ENCODE measurements at regions of chr18 and their contacts with region 1.

Region 1: GRCh38 chr18:23578891-23579653 is 7.2 kb downstream of the NPC1 start:
- DNase-seq: no peak
- H3K4me3 ChIP-seq: no peak overlapping the region
- H3K27ac ChIP-seq: no peak overlapping the region
- H3K4me1 ChIP-seq: peaks cover 5 to 53% (median 11%) of the 10 kb centered on the region in 4 donors
- H3K27me3 ChIP-seq: no peaks in the 10 kb centered on the region
- CTCF ChIP-seq: no peak
- EP300 ChIP-seq: no peak
- POLR2A ChIP-seq: no peak

Region 2: DNA sequence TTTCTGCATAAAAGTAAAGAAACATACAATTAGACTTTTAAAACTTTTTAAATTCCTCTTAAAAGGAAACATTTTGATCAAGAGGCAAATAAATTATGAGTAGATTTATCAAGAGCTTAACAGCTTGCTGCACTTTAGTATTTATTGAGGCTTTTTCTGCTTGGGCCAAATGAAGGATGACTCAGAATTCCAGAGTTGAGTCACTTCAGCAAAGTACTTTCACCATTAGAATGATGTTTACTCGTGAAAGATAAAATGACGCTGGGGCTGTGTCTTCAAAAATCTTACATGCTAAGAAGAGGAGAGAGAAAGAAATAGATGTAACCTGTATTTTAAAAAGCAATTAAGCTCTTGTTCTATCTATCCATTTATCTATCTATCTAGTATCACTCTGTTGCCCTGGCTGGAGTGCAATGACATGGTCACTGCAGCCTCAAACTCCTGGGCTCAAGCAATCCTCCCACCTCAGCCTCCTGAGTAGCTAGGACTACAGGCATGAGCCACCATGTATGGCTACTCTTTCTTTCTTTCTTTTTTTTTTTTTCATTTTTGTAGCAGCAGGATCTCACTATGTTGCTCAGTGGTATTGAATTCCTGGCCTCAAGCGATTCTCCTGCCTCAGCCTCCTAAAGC is 201.3 kb before region 1 on chr18:
- in situ Hi-C with region 1: no loop called
- intact Hi-C with region 1: no loop called
- DNase-seq: no peak
- H3K4me3 ChIP-seq: no peak overlapping the region
- H3K27ac ChIP-seq: peak overlapping the region; percentile 44 to 76 (median 64)
- H3K4me1 ChIP-seq: peaks cover 3 to 20% (median 13%) of the 10 kb centered on the region in 4 donors
- H3K27me3 ChIP-seq: no peaks in the 10 kb centered on the region
- CTCF ChIP-seq: no peak
- EP300 ChIP-seq: no peak
- POLR2A ChIP-seq: no peak

Region 3: GRCh38 chr18:23503038-23503962 is 75.8 kb before region 1 on chr18 and contains the start of gene RMC1:
- in situ Hi-C with region 1: loop called in 1 of 4 experiments (anchors 5 kb)
- intact Hi-C with region 1: no loop called
- DNase-seq: peak; percentile 98
- H3K4me3 ChIP-seq: peak within 1 kb of the TSS; percentile 85 to 99 (median 93)
- H3K27ac ChIP-seq: peak within 1 kb of the TSS; percentile 88 to 97 (median 93)
- H3K4me1 ChIP-seq: peaks cover 5 to 37% (median 22%) of the 10 kb centered on the region in 4 donors
- H3K27me3 ChIP-seq: no peaks in the 10 kb centered on the region
- CTCF ChIP-seq: peak in 1 of 5 experiments; percentile 29
- EP300 ChIP-seq: no peak
- POLR2A ChIP-seq: peak; percentile 95
- total RNA-seq, gene RMC1: 4.4 to 34.1 (median 26.6) TPM

Region 4: DNA sequence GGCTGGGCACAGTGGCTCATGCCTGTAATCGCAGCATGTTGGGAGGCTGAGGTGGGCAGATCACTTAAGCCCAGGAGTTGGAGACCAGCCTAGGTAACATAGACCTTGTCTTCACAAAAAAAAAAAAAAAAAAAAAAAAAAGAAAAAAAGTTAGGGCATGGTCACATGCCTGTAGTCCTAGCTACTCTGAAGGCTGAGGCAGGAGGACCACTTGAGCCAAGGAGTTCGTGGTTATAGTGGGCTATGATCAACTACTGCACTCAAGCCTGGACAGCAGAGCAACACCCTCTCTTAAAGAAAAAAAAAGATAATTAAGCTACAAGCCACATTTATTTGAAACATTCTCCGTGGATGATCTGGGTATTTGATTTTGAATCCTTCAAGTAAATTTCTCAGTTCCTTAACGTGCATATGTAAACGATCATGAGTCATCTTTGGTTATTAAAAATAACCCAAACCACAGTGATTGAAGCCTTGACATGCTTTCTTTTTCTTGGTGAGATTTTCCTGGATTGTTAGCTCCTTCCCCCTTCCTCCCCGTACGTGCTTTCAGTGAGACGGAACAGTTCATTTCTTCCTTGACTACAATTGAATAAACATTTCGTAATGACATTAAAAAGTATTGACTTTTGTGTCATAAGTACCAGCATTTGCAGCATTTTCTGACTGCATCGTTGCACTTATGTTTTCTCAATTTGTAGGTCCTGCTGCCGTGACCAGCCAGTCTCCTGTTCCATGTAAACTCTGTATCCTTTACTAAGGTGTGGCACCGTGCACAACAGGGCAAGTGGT is 55.4 kb before region 1 on chr18:
- in situ Hi-C with region 1: loop called in 3 of 4 experiments (anchors 5 to 10 kb)
- intact Hi-C with region 1: no loop called
- DNase-seq: no peak
- H3K4me3 ChIP-seq: no peak overlapping the region
- H3K27ac ChIP-seq: no peak overlapping the region
- H3K4me1 ChIP-seq: no peaks in the 10 kb centered on the region
- H3K27me3 ChIP-seq: no peaks in the 10 kb centered on the region
- CTCF ChIP-seq: no peak
- EP300 ChIP-seq: no peak
- POLR2A ChIP-seq: no peak

Region 5: GRCh38 chr18:23900994-23901393 is 321.9 kb after region 1 on chr18:
- in situ Hi-C with region 1: no loop called
- intact Hi-C with region 1: no loop called
- DNase-seq: no peak
- H3K4me3 ChIP-seq: no peak overlapping the region
- H3K27ac ChIP-seq: no peak overlapping the region
- H3K4me1 ChIP-seq: no peaks in the 10 kb centered on the region
- H3K27me3 ChIP-seq: no peaks in the 10 kb centered on the region
- CTCF ChIP-seq: no peak
- EP300 ChIP-seq: no peak
- POLR2A ChIP-seq: no peak

Measured in transverse colon (tissue), 4 donors.